Left ventricle myocardium superior (tissue), 1 donor: ENCODE measurements at regions of chr15 and their contacts with region 1.

Region 1: GRCh38 chr15:39444735-39445470 is 136.0 kb upstream of the THBS1 start:
- DNase-seq: no peak
- ATAC-seq: peak; percentile 71

Region 2: DNA sequence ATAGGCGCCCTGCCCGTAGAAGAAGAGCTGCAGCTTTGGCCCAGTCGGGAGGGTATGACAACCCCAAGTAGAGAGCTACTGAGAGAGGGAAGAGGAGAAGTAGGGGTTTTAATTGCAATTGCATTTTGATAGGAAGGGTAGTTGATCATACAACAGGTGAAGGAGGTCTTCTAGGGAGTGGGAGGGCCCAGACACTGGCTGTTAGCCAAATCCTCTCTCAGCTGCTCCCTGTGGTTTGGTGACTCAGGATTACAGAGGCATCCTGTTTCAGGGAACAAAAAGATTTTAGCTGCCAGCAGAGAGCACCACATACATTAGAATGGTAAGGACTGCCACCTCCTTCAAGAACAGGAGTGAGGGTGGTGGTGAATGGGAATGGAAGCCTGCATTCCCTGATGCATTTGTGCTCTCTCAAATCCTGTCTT is 272.9 kb before region 1 on chr15:
- intact Hi-C with region 1: loop called (anchors 5 kb)
- DNase-seq: no peak
- ATAC-seq: peak; percentile 92